Posterior vena cava (tissue), 2 donors: ENCODE measurements at regions of chr7 and their contacts with region 1.

Region 1: DNA sequence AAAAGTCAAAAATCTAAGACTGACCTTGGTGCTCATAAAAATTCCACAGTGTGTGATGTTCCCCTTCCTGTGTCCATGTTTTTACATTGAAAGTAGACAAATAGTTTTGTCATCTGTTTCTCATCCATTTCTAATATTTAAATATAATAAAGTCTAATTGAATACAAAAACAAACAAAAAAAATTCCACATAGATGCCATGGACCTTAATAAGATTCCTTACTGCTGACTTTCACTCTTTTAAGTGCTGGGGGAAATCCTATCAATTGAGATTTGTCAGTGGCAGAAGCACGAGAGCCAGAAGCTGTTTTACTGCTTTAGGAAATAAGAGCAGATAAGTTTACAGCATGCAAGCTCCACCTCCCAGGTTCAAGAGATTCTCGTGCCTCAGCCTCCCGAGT is 310.0 kb downstream of the ABCA13 start:
- DNase-seq: no peak

Region 2: GRCh38 chr7:48511080-48511479 is 29.8 kb after region 1 on chr7:
- intact Hi-C with region 1: no loop called
- DNase-seq: no peak

Region 3: DNA sequence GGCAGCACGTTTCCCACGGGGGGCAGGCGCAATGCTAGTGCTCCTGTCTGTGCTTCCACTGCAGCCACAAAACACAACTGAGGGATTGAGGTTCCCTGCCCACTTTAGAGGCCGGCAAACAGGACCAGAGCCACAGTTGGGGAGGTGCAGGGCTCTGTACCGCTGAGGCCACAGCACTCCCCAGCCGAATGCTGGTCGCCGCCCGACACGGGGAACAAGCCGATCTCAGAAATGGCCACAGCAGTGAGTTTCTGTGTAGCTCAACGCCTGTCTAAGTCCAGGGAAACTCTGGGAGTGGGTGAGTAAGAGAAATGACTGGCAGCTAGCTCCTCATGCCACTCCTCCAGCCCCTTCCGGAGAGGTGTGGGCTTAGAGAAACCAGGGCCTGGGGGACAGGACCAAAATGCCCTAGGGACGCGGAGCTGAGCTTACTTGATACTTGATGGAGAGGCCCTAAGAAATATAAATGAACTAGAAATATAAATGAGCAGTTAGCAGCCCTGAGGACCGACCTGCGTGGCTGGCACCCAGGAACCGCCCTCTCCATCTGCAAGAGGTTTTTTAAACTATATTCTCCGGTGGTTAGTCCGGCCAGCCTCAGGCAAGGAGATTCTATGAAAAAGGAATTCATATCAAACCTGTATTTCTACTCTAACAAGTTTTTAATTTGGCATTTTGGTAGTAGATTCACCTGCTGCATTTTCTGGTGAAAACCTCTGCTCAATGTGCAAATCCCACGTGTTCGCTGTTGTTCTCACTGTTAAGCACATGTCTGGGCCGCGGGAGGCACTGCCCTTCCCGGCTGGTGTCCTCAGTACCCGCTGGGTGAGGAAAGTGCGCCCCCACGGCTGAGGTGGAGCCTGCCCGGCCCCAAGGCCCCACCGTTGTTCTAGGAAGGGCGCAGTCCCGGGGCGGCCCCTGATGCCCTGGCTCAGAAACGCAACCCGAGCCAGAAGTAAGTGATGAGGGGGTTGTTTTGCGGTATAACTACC is 1098.5 kb after region 1 on chr7:
- intact Hi-C with region 1: loop called in 1 of 2 experiments (anchors 5 kb)
- DNase-seq: no peak